ENCODE measurements at regions of chr1 and their contacts with region 1.

Region 1: DNA sequence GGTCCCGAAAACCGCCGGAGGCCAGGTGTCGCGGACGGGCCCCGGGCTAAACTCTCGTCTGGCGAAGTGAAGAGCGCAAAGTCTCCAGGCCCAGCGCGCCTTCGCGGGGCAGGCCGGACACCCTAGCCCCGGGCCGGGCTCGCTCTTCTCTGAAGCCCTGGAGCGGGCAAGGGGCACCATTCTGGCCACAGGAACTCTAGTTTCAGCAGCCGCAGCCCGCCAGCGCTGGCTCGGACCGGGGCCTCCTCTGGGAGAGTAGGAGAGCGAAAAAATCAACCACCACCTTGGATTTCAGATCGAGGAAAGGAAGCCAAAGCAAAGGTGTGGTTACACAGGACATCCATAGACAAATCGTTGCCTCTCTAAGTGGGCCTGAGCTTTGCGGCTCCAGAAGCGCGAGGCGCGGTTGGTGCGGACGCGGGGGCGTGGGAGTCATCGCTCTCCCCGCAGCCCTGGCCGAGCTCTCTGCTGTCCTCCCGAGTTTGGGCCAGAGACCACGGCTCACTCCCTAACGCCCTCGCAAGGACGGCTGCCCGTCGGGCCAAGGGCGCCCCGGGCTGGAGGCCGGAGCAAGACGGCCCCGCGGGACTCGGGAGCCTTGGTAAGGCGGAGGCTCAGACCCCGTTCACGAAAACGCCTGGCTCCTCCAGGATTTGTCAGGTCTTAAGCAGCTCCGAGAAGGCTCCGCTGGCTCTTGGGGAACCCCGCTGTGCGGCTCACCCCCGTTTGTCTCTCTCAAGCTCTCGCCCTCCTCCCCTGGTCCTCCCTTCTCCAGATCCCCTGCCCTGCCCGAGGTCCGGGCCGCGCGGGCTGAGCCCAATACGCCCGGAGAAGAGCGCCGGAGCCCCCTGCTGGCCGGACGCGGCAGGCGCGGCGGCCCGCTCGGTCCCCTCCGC is 132.9 kb upstream of the DPYD start:
- DNase-seq: peak; percentile 12 to 74 (median 55)
- ATAC-seq: peak; percentile 91
- H3K4me3 ChIP-seq: peak overlapping the region; percentile 55
- H3K4me3 Mint-ChIP-seq: peak overlapping the region; percentile 61 to 81 (median 72)
- H3K27ac ChIP-seq: no peak overlapping the region
- H3K27ac Mint-ChIP-seq: no peak overlapping the region
- H3K4me1 ChIP-seq: peaks cover 6 to 20% of the 10 kb centered on the region in 2 donors
- H3K4me1 Mint-ChIP-seq: peaks cover 17 to 29% (median 23%) of the 10 kb centered on the region in 7 donors
- H3K27me3 ChIP-seq: peaks cover 18 to 23% of the 10 kb centered on the region in 2 donors
- H3K27me3 Mint-ChIP-seq: peaks cover 78 to 90% (median 80%) of the 10 kb centered on the region in 5 donors

Region 2: GRCh38 chr1:96236156-96236739 is 1817.5 kb before region 1 on chr1:
- CTCF ChIA-PET with region 1: no interaction called
- POLR2A ChIA-PET with region 1: no interaction called
- intact Hi-C with region 1: loop called (anchors 2 to 5 kb)
- DNase-seq: no peak
- ATAC-seq: no peak
- H3K4me3 ChIP-seq: no peak overlapping the region
- H3K4me3 Mint-ChIP-seq: no peak overlapping the region
- H3K27ac ChIP-seq: no peak overlapping the region
- H3K27ac Mint-ChIP-seq: no peak overlapping the region
- H3K4me1 ChIP-seq: no peaks in the 10 kb centered on the region
- H3K4me1 Mint-ChIP-seq: no peaks in the 10 kb centered on the region
- H3K27me3 ChIP-seq: no peaks in the 10 kb centered on the region
- H3K27me3 Mint-ChIP-seq: no peaks in the 10 kb centered on the region

Region 3: DNA sequence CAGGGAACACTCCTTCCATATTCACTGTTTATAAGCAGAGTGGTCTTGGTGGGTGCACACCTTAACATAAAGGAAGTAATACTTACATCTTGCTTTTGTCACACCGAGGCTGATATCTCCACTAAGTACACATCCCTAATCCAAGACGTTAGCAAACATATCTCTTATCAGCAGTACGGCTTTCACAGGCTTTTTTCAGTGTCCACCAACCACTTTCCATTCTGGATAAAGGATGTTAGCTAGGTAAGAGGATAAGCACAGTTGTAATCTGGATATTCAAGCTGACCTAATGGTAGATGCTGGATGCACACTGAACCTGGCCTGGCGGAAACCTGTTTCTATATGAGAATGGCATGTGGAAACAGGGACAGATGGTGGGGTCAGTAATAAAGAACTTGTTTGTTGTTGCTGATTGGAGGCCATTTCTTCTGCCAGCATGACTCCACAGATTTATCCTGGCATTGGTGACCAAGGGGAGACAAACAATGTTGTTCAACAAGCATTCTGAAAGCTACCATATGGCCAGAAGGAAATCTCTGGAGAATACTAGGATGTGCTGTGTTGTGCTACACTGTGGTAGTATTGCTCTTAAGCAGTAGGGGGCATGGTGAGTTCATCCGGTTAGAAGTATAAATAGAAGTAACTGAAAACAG is 915.7 kb before region 1 on chr1:
- CTCF ChIA-PET with region 1: interaction called, 4 read pairs
- POLR2A ChIA-PET with region 1: no interaction called
- intact Hi-C with region 1: loop called (anchors 1 kb)
- DNase-seq: peak in 5 of 9 donors; percentile 5 to 13 (median 9)
- ATAC-seq: peak; percentile 76
- H3K4me3 ChIP-seq: no peak overlapping the region
- H3K4me3 Mint-ChIP-seq: no peak overlapping the region
- H3K27ac ChIP-seq: no peak overlapping the region
- H3K27ac Mint-ChIP-seq: no peak overlapping the region
- H3K4me1 ChIP-seq: no peaks in the 10 kb centered on the region
- H3K4me1 Mint-ChIP-seq: peaks cover 0 to 21% (median 10%) of the 10 kb centered on the region in 7 donors
- H3K27me3 ChIP-seq: no peaks in the 10 kb centered on the region
- H3K27me3 Mint-ChIP-seq: no peaks in the 10 kb centered on the region

Region 4: DNA sequence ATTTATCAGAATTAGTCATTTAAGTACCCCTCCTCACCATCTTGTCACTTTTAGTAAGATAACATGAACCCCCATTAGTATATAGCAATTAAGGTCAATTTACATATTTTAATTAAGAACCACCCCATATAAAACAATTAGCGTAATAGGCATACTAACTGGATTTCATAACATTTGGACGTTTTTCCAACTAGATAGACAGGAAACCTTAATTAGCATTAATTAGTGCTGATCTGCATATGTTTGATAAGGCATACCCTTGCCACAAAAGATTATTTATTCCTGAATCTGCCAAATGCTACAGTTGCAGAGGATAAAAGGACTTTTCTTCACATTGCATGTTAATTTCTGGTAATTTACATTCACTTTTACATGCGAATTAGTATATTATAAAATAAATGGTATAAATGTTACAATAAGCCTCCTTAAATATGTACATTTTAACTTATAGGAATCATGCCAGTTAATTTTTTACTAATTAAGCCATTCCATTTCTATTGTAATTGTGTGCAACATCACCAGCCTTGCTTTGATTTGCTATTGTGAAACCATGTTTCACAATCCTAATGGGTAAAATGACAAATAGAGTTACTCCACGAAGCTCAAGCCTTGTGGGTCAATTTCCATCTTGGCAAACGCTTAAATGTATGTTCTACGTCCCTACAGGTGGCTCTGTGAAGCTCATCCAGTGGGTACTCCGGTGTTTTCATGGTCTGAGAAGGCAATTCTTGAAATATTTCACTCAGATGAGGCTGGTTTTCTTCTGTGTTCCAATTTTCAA is 602.5 kb before region 1 on chr1:
- CTCF ChIA-PET with region 1: no interaction called
- POLR2A ChIA-PET with region 1: no interaction called
- intact Hi-C with region 1: loop called in 1 of 2 experiments (anchors 10 kb)
- DNase-seq: no peak
- ATAC-seq: no peak
- H3K4me3 ChIP-seq: no peak overlapping the region
- H3K4me3 Mint-ChIP-seq: no peak overlapping the region
- H3K27ac ChIP-seq: no peak overlapping the region
- H3K27ac Mint-ChIP-seq: no peak overlapping the region
- H3K4me1 ChIP-seq: no peaks in the 10 kb centered on the region
- H3K4me1 Mint-ChIP-seq: peaks cover 0 to 2% (median 0%) of the 10 kb centered on the region in 7 donors
- H3K27me3 ChIP-seq: no peaks in the 10 kb centered on the region
- H3K27me3 Mint-ChIP-seq: no peaks in the 10 kb centered on the region

Region 5: GRCh38 chr1:97538113-97538512 is 515.6 kb before region 1 on chr1:
- CTCF ChIA-PET with region 1: no interaction called
- POLR2A ChIA-PET with region 1: no interaction called
- intact Hi-C with region 1: no loop called
- DNase-seq: no peak
- ATAC-seq: no peak
- H3K4me3 ChIP-seq: no peak overlapping the region
- H3K4me3 Mint-ChIP-seq: no peak overlapping the region
- H3K27ac ChIP-seq: no peak overlapping the region
- H3K27ac Mint-ChIP-seq: no peak overlapping the region
- H3K4me1 ChIP-seq: no peaks in the 10 kb centered on the region
- H3K4me1 Mint-ChIP-seq: peaks cover 0 to 9% (median 0%) of the 10 kb centered on the region in 7 donors
- H3K27me3 ChIP-seq: no peaks in the 10 kb centered on the region
- H3K27me3 Mint-ChIP-seq: no peaks in the 10 kb centered on the region

Region 6: DNA sequence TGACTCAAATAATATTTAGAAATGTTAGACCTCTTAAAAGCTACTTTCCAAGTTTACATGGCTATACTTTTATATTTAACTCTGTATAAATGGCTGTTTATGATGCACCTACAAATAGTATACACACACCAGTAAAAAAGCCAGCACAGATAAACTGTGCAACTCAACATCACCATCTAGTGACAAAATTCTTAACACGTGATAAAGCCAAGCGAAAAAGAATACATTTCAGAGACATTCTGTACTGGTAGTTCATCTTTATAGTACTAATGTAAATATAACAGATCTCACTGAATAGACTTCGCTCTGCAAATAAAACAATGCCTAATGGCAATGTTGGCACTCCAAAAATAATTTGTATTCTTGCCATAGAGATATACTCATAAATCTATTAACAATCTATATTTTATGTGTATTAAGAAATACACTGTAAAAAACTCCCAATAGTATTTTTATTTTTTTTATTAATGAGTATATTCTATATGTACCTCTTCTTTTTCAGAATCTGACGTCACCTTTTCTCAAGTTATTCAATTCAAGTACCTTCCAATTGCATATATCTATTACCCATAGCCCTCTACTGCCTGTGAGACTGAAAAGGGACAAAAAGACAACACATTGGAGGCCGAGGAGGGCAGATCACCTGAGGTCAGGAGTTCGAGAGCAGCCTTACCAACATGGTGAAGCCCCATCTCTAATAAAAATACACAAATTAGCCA is 233.1 kb before region 1 on chr1:
- CTCF ChIA-PET with region 1: no interaction called
- POLR2A ChIA-PET with region 1: no interaction called
- intact Hi-C with region 1: loop called in 1 of 2 experiments (anchors 5 kb)
- DNase-seq: peak in 1 of 9 donors; percentile 7
- ATAC-seq: peak; percentile 32
- H3K4me3 ChIP-seq: no peak overlapping the region
- H3K4me3 Mint-ChIP-seq: no peak overlapping the region
- H3K27ac ChIP-seq: no peak overlapping the region
- H3K27ac Mint-ChIP-seq: no peak overlapping the region
- H3K4me1 ChIP-seq: no peaks in the 10 kb centered on the region
- H3K4me1 Mint-ChIP-seq: peaks cover 0 to 9% (median 1%) of the 10 kb centered on the region in 7 donors
- H3K27me3 ChIP-seq: no peaks in the 10 kb centered on the region
- H3K27me3 Mint-ChIP-seq: no peaks in the 10 kb centered on the region

Region 7: DNA sequence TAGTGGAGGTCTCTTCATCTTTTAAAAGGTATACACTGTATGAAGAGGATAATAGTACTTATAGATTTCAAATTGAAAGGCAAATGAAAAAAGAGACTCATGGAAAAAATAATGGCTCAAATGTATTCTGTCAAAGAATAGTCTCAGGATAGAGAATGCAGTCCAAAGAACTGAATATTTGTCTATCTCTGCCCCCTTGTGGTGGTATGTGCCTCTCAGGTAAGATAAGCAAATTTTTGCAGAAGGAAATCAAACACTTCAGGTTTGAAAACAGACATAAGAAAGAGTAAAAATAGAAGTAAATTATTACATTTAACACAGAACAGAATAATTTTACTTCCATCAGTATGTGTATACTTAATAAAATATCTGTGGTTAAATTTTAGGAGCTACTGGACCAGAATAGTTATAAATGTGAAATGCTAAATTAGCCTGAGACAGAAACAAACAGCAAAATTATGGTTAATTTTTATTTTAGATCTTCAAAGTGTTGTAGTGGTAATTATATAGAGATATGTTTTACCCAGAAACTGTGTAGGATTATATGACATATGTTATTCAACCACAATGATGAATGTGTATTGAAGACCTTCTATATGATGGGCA is 1427.8 kb after region 1 on chr1:
- CTCF ChIA-PET with region 1: no interaction called
- POLR2A ChIA-PET with region 1: no interaction called
- intact Hi-C with region 1: loop called in 1 of 2 experiments (anchors 1 kb)
- DNase-seq: peak in 7 of 9 donors; percentile 6 to 61 (median 47)
- ATAC-seq: peak; percentile 59
- H3K4me3 ChIP-seq: no peak overlapping the region
- H3K4me3 Mint-ChIP-seq: no peak overlapping the region
- H3K27ac ChIP-seq: no peak overlapping the region
- H3K27ac Mint-ChIP-seq: no peak overlapping the region
- H3K4me1 ChIP-seq: no peaks in the 10 kb centered on the region
- H3K4me1 Mint-ChIP-seq: no peaks in the 10 kb centered on the region
- H3K27me3 ChIP-seq: no peaks in the 10 kb centered on the region
- H3K27me3 Mint-ChIP-seq: peaks cover 8 to 35% (median 17%) of the 10 kb centered on the region in 5 donors